ENCODE measurements at regions of chr16 and their contacts with region 1.

Region 1: GRCh38 chr16:10743610-10744393 is at the start of gene NUBP1:
- DNase-seq: peak; percentile 97 to 99 (median 99)
- ATAC-seq: peak; percentile 98
- H3K4me3 ChIP-seq: peak within 1 kb of the TSS; percentile 74
- H3K4me3 Mint-ChIP-seq: peak within 1 kb of the TSS; percentile 84 to 99 (median 95)
- H3K27ac ChIP-seq: peak within 1 kb of the TSS; percentile 92
- H3K27ac Mint-ChIP-seq: peak within 1 kb of the TSS; percentile 98 to 100 (median 99)
- H3K4me1 ChIP-seq: peaks cover 7 to 10% of the 10 kb centered on the region in 2 donors
- H3K4me1 Mint-ChIP-seq: peaks cover 15 to 48% (median 27%) of the 10 kb centered on the region in 7 donors
- H3K27me3 ChIP-seq: no peaks in the 10 kb centered on the region
- H3K27me3 Mint-ChIP-seq: peaks cover 0 to 2% (median 0%) of the 10 kb centered on the region in 5 donors
- total RNA-seq, gene NUBP1: 24.0 to 30.0 (median 25.5) TPM

Region 2: DNA sequence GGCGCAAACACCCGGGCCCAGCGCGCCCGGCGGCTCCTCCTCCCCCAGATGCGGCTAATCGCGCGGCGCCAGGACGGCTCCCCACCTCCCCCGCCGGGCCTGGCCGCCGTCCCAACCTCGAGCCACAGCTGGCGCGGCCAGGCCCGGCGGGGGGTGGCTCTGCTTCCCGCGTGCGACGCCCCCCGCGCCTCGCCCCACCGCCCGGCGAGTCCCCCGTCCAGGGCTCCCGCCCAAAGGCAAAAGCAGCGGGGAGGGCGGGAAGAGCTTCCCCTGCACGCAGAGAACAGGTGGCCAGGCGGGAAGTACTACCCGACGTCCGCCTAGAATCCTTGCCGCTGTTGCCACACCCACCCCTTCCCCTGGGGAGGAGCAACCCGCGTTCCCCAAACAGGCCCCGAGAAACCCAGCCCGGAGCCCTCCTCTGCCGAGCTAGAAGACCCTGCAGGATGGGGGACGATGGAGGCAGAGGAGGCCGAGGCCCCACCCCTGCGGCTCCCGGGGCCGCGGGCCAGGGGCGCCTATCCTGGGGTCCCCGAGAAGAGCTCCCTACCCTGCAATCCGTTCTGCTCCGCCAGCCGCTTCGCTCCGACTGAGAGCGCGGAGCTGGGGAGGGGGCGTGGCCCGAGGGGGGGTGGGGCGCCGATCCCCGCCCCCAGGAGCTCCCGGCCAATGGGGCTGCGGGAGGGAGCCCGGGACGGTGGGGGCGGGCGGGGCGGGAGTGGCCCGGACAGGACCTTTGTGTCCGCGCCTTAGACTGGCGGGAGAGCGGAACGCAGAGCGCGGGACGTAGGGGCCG is 1875.2 kb before region 1 on chr16 and contains the start of gene CARHSP1:
- CTCF ChIA-PET with region 1: no interaction called
- POLR2A ChIA-PET with region 1: no interaction called
- intact Hi-C with region 1: loop called (anchors 2 to 5 kb)
- DNase-seq: peak; percentile 65 to 87 (median 74)
- ATAC-seq: peak; percentile 91
- H3K4me3 ChIP-seq: peak within 1 kb of the TSS; percentile 74
- H3K4me3 Mint-ChIP-seq: peak within 1 kb of the TSS; percentile 93 to 98 (median 96)
- H3K27ac ChIP-seq: peak within 1 kb of the TSS; percentile 67
- H3K27ac Mint-ChIP-seq: peak within 1 kb of the TSS; percentile 88 to 98 (median 95)
- H3K4me1 ChIP-seq: peaks cover 6 to 12% of the 10 kb centered on the region in 2 donors
- H3K4me1 Mint-ChIP-seq: peaks cover 30 to 63% (median 51%) of the 10 kb centered on the region in 7 donors
- H3K27me3 ChIP-seq: no peaks in the 10 kb centered on the region
- H3K27me3 Mint-ChIP-seq: no peaks in the 10 kb centered on the region
- total RNA-seq, gene CARHSP1: 29.6 to 123 (median 39.9) TPM

Region 3: DNA sequence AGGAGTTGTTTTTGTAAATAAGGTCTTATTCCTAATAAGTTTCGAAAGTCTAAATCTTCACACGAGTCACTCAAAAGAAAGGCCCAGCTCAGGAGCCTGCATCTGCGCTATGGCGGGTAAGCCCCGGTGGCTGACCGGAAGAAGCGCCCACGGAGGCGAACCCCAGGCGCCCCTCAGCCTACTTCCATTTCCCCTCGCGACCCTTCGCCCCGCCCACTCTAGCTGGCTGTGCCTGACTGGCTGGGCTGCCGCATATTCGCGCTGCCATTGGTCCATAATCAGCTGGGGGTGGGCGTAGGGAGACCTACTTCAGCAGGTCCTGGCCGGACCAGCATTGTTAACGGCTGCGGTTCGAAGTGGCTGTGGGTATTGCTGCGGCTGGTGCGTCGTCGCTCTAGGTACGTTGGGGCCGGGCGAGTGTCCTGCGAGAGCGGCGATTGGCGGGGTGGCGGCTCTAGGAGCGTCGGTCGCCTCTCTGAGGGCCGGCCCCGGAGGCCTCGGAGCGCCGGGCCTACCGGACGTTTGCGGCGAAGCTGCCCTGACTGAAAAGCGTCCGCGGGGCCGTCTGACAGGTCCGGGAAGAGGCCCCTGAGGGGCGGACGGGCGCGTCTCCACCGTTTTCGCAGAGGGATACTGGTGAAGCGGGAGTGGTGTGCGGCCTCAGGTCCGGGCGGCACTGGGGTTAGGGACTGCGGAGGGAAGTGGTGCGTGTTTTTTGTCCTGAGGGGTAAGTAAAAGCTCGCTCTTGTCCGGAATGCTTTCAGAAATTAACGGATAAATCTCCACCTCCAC is 357.9 kb before region 1 on chr16 and contains the start of gene ATF7IP2:
- CTCF ChIA-PET with region 1: no interaction called
- POLR2A ChIA-PET with region 1: interaction called, 6 read pairs
- intact Hi-C with region 1: loop called (anchors 1 kb)
- DNase-seq: peak; percentile 68 to 85 (median 83)
- ATAC-seq: peak; percentile 99
- H3K4me3 ChIP-seq: peak within 1 kb of the TSS; percentile 67
- H3K4me3 Mint-ChIP-seq: peak within 1 kb of the TSS; percentile 89 to 99 (median 98)
- H3K27ac ChIP-seq: peak within 1 kb of the TSS; percentile 84
- H3K27ac Mint-ChIP-seq: peak within 1 kb of the TSS; percentile 90 to 99 (median 97)
- H3K4me1 ChIP-seq: peaks cover 14 to 16% of the 10 kb centered on the region in 2 donors
- H3K4me1 Mint-ChIP-seq: peaks cover 31 to 52% (median 47%) of the 10 kb centered on the region in 7 donors
- H3K27me3 ChIP-seq: no peaks in the 10 kb centered on the region
- H3K27me3 Mint-ChIP-seq: peaks cover 0 to 3% (median 0%) of the 10 kb centered on the region in 5 donors
- total RNA-seq, gene ATF7IP2: 56.5 to 75.5 (median 67.1) TPM

Region 4: GRCh38 chr16:10812312-10813098 is 68.7 kb after region 1 on chr16:
- CTCF ChIA-PET with region 1: no interaction called
- POLR2A ChIA-PET with region 1: no interaction called
- intact Hi-C with region 1: no loop called
- DNase-seq: no peak
- ATAC-seq: no peak
- H3K4me3 ChIP-seq: no peak overlapping the region
- H3K4me3 Mint-ChIP-seq: no peak overlapping the region
- H3K27ac ChIP-seq: no peak overlapping the region
- H3K27ac Mint-ChIP-seq: no peak overlapping the region
- H3K4me1 ChIP-seq: no peaks in the 10 kb centered on the region
- H3K4me1 Mint-ChIP-seq: peaks cover 0 to 2% (median 0%) of the 10 kb centered on the region in 7 donors
- H3K27me3 ChIP-seq: no peaks in the 10 kb centered on the region
- H3K27me3 Mint-ChIP-seq: peaks cover 0 to 20% (median 5%) of the 10 kb centered on the region in 5 donors

Region 5: DNA sequence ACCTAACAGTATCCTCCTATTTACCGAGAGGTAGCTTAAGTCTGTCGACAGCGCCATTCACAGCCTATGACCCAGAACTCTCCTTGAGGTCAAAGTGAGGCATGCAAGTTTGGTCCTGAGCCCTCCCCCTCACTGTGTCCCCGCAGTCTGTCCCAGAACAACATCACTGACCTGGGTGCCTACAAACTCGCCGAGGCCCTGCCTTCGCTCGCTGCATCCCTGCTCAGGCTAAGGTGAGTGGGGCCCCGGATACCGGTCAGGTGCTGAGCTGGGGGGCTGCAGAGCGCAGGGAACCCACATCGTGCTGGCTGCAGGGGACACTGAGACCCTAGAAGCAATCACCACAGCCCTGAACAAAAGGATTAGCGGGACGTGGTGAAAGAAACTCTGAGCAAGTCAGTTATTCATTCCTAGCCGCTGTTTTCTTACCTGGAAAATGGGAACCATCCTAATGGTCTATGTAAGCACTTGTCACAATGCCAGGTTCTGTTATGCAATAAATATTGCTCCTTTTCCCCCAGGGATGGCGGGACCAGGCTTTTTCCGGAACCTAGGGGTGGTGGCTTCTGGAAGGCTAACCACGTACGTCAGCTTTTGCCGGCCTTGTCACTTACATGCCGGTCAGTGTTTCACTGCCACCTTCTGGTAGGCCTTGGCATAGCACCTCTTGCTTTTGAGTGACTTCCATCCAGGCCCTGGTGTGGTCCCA is 174.6 kb after region 1 on chr16:
- CTCF ChIA-PET with region 1: no interaction called
- POLR2A ChIA-PET with region 1: no interaction called
- intact Hi-C with region 1: loop called in 1 of 2 experiments (anchors 1 kb)
- DNase-seq: peak in 8 of 9 donors; percentile 44 to 83 (median 52)
- ATAC-seq: peak; percentile 90
- H3K4me3 ChIP-seq: no peak overlapping the region
- H3K4me3 Mint-ChIP-seq: peak overlapping the region in 2 of 10 donors; percentile 21 to 45
- H3K27ac ChIP-seq: no peak overlapping the region
- H3K27ac Mint-ChIP-seq: no peak overlapping the region
- H3K4me1 ChIP-seq: no peaks in the 10 kb centered on the region
- H3K4me1 Mint-ChIP-seq: peaks cover 0 to 12% (median 4%) of the 10 kb centered on the region in 7 donors
- H3K27me3 ChIP-seq: no peaks in the 10 kb centered on the region
- H3K27me3 Mint-ChIP-seq: no peaks in the 10 kb centered on the region

Region 6: DNA sequence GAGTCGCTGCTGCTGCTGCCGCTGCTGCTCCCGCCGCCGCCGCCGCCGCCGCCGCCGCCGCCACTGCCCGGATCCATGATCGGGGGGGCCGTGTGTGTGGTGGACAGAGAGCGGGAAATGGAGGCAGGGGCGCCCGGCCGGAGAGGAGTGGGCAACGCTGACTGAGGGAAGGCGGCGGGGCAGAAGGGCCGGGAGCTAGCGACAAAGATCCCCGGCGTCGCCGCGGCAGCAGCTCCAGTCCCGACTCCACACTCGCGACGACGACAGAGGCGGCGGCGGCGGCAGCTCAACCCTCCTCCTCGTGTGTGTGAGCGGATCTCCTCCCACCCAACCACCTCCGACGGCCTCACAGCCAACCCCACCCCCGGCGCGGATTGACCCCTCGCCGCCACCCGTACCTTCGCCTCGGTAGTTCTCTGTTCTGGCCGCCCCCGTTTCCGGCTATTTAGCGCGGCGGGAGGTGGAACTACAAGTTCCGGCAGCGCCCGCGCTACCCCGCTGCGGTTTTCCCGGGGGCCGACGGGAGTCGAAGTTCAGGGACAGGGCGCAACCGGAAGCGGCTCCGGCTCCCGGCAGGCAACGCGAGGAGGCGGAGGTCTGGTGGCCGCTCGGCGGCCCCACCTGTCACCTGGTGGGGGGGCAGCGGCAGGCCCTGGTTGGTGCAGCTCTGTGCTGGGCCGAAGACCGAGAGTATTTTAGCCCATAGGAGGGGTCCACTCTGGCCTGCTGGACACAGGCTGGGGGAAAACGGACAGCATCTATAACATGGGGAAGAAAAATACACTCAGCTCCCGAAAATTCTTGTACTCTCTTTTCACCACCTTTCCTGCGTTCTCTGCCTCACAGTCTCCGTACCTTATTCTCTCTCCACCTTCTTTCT is 1172.1 kb after region 1 on chr16 and contains the start of gene GSPT1:
- CTCF ChIA-PET with region 1: no interaction called
- POLR2A ChIA-PET with region 1: no interaction called
- intact Hi-C with region 1: loop called (anchors 5 kb)
- DNase-seq: peak; percentile 96 to 100 (median 99)
- ATAC-seq: peak; percentile 94
- H3K4me3 ChIP-seq: peak within 1 kb of the TSS; percentile 74
- H3K4me3 Mint-ChIP-seq: peak within 1 kb of the TSS; percentile 85 to 99 (median 96)
- H3K27ac ChIP-seq: peak within 1 kb of the TSS; percentile 87
- H3K27ac Mint-ChIP-seq: peak within 1 kb of the TSS; percentile 87 to 98 (median 95)
- H3K4me1 ChIP-seq: peaks cover 13 to 24% of the 10 kb centered on the region in 2 donors
- H3K4me1 Mint-ChIP-seq: peaks cover 23 to 37% (median 34%) of the 10 kb centered on the region in 7 donors
- H3K27me3 ChIP-seq: no peaks in the 10 kb centered on the region
- H3K27me3 Mint-ChIP-seq: peaks cover 0 to 10% (median 0%) of the 10 kb centered on the region in 5 donors
- total RNA-seq, gene GSPT1: 92.8 to 148 (median 101) TPM

Region 7: DNA sequence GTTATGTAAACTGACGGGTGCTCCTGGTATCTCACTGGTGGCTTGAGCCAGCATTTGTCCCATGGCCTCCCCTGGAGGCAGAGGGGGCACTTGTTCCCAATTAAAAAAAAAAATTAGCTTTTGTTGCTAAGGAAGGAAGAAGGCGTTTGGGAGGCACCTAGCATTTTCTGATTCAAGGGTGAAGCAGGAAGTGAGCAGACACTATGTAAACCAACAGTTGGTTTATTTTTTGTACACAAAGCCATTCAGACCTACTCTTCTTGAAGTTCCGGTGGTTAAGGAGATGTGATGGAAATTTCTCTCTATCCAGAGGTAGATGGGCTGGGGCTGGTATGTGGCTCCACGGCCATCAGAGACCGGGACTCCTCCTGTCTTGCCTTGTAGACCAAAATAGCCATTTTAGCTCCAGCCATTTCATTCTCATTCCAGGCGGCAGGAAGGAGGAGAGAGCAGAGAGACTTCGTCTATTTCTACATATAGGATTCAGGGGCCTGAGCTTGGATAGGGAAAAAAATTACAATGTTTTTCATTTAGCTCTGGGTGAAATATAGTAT is 1335.7 kb after region 1 on chr16:
- CTCF ChIA-PET with region 1: no interaction called
- POLR2A ChIA-PET with region 1: no interaction called
- intact Hi-C with region 1: loop called in 1 of 2 experiments (anchors 5 kb)
- DNase-seq: peak in 5 of 9 donors; percentile 42 to 61 (median 52)
- ATAC-seq: peak; percentile 34
- H3K4me3 ChIP-seq: peak overlapping the region; percentile 24
- H3K4me3 Mint-ChIP-seq: peak overlapping the region; percentile 54 to 94 (median 78)
- H3K27ac ChIP-seq: peak overlapping the region; percentile 84
- H3K27ac Mint-ChIP-seq: peak overlapping the region; percentile 88 to 97 (median 96)
- H3K4me1 ChIP-seq: peaks cover 40 to 66% of the 10 kb centered on the region in 2 donors
- H3K4me1 Mint-ChIP-seq: peaks cover 34 to 93% (median 77%) of the 10 kb centered on the region in 7 donors
- H3K27me3 ChIP-seq: no peaks in the 10 kb centered on the region
- H3K27me3 Mint-ChIP-seq: no peaks in the 10 kb centered on the region

Measured in naive thymus-derived CD4-positive, alpha-beta T cell (primary cell).